ENCODE measurements at regions of chr5 and their contacts with region 1.

Region 1: GRCh38 chr5:154776167-154776566 is 21.0 kb downstream of the LARP1 start:
- DNase-seq: no peak
- ATAC-seq: no peak
- H3K4me3 Mint-ChIP-seq: no peak overlapping the region
- H3K27ac Mint-ChIP-seq: no peak overlapping the region
- H3K4me1 Mint-ChIP-seq: peaks cover 62% of the 10 kb centered on the region
- H3K27me3 Mint-ChIP-seq: no peaks in the 10 kb centered on the region
- CTCF ChIP-seq: no peak

Region 2: GRCh38 chr5:154761046-154761736 is 15.0 kb before region 1 on chr5:
- CTCF ChIA-PET with region 1: no interaction called
- POLR2A ChIA-PET with region 1: no interaction called
- intact Hi-C with region 1: loop called (anchors 2 kb)
- DNase-seq: no peak
- ATAC-seq: peak; percentile 45
- H3K4me3 Mint-ChIP-seq: peak overlapping the region; percentile 64
- H3K27ac Mint-ChIP-seq: peak overlapping the region; percentile 81
- H3K4me1 Mint-ChIP-seq: peaks cover 77% of the 10 kb centered on the region
- H3K27me3 Mint-ChIP-seq: no peaks in the 10 kb centered on the region
- CTCF ChIP-seq: no peak

Measured in activated B cell treated with CpG ODN at 0.5 μM for 24 hours (primary cell).